ENCODE measurements at regions of chr1 and their contacts with region 1.

Region 1: DNA sequence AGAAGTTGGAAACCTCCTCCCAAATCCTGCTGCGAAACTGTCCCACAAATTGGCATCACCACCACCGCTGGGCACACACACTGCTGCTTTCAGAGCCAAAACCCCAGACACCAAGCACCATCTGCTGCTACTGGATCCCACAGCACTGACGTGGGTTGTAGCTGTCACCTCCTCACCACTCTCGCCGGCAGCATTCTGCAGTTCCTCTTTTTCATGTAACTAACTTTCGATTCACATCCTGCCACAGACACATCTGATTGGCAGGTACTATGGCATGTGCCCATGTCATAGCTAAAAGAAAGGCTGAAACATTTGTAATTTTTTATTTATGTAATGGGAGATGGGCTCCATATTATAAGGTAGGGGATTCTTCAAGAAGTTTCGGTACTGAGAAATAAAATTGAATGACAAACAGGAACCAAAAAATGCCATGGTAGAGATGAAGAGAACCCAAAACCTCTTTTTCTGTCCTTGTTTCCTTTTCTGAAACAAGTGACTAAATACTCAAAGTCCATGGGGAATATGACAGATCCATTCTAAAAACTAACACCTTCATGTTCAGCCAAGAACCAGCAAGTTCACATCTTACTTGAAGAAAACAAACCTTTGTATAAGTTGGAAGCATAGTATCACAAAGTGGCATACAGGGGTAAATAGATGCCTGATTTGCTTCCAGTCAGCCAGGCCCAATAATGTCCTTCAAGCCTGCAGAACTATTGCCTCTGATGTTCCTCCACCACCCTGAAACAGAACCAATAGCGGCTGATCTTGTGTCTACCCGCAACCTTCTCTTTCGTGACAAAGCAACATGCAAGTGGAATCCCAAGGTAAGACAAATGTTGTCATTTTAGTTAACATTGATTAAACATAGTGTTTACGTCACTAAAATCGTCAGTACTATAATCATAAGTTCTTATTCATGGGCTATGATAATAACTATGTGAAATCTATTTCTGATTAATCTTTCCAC is 26.6 kb upstream of the RGS13 start:
- DNase-seq: no peak
- H3K4me3 Mint-ChIP-seq: no peak overlapping the region
- H3K27ac Mint-ChIP-seq: no peak overlapping the region
- H3K4me1 Mint-ChIP-seq: peaks cover 9% of the 10 kb centered on the region
- H3K27me3 Mint-ChIP-seq: no peaks in the 10 kb centered on the region
- CTCF ChIP-seq: no peak

Region 2: DNA sequence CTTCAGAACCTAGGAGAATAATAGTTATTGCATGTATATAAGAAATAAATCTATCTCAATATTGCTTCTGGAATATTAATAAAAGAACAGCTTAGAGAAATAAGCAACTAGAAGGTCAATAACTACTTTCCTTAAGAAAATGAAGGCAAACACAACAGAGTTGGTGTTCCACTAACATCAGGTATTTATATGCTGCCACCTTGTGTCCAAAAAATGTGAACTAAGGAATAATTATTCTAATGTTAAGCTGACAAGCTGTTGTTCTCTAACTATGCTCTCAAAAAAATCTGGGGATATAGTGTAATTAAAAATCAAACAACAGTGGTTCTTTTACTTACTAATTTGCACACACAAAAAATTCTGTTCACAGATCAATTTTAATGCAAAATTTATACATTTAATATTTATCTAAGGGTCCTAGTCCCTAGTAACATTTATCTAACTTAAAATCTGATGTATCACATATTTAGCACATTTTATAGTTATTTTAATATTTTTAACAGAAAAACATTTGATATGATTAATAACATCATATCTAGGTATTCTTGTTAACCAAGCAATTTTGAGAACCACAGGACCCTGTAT is 410.1 kb after region 1 on chr1:
- CTCF ChIA-PET with region 1: no interaction called
- intact Hi-C with region 1: loop called (anchors 5 kb)
- DNase-seq: peak; percentile 27
- H3K4me3 Mint-ChIP-seq: no peak overlapping the region
- H3K27ac Mint-ChIP-seq: no peak overlapping the region
- H3K4me1 Mint-ChIP-seq: no peaks in the 10 kb centered on the region
- H3K27me3 Mint-ChIP-seq: no peaks in the 10 kb centered on the region
- CTCF ChIP-seq: peak; percentile 58

Region 3: DNA sequence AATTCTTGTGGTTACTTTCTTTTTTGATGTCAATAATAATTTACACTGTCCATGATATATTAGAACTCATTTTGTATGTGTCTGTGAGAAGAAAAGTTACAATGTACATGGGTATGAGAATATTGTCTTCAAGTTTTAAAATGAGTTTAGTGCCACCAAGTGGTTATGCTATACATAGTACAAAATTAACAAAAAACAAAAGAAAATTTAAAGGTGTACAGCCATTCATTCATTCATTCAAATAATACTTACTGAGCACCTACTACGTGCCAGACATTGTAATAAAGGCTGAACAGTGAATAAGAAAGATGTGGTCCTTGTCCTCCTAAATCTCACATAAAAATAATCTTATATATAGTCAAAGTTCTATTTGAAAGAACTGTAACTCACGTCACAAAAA is 422.0 kb after region 1 on chr1:
- CTCF ChIA-PET with region 1: no interaction called
- intact Hi-C with region 1: loop called (anchors 5 kb)
- DNase-seq: no peak
- H3K4me3 Mint-ChIP-seq: no peak overlapping the region
- H3K27ac Mint-ChIP-seq: no peak overlapping the region
- H3K4me1 Mint-ChIP-seq: peaks cover 10% of the 10 kb centered on the region
- H3K27me3 Mint-ChIP-seq: no peaks in the 10 kb centered on the region
- CTCF ChIP-seq: no peak

Measured in Calu3 (cell line).